ENCODE measurements at regions of chr6 and their contacts with region 1.

Region 1: DNA sequence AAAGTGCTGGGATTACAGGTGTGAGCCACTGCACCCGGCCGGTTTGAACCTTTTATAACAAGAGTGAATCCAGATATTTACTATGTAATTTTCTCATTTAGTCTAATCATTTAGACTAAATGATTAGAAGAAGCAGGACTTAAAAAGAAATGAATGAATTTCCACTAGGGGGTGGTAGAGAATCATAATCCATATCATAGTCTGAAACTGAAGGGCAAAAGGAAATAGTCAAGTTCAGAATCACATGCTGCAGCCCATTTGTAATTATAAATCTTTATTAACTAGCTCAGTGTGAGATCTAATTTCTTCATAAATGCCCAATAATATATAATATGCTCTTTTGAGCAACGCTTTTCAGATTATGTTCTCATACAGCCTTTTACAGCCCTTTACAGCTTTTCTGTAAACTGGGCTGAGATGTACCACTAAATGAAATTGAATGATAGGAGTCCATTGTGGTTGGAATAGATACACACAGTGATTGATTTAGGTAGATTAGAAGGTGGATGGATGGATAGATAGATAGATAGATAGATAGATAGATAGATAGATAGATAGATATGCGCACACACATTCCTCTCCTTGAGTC is 31.8 kb downstream of the PSMB9 start:
- DNase-seq: no peak
- H3K4me3 ChIP-seq: no peak overlapping the region
- H3K27ac ChIP-seq: no peak overlapping the region
- H3K4me1 ChIP-seq: no peaks in the 10 kb centered on the region
- H3K27me3 ChIP-seq: no peaks in the 10 kb centered on the region
- CTCF ChIP-seq: peak; percentile 36 to 85 (median 76)
- POLR2A ChIP-seq: no peak

Region 2: DNA sequence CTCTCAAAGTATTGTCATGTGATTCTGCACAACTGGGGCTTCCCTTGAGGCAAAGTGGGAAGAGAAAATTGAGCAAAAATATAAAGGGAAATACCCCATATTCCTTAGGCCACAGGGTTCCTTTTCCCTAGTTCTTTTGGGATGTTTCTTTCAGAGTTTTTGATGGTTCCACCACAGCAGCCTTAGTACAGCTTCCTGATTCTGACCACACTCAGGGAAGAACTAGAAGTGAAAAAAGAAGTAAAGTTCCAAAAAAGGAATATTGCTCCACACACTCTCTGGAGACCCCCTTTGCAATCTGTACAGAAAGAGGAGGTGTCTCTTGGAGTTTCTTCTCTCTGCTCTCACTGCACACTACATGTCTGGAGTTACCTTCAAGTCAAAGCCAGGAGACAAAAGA is 172.6 kb before region 1 on chr6:
- intact Hi-C with region 1: no loop called
- DNase-seq: no peak
- H3K4me3 ChIP-seq: no peak overlapping the region
- H3K27ac ChIP-seq: no peak overlapping the region
- H3K4me1 ChIP-seq: no peaks in the 10 kb centered on the region
- H3K27me3 ChIP-seq: no peaks in the 10 kb centered on the region
- CTCF ChIP-seq: no peak
- POLR2A ChIP-seq: no peak

Region 3: DNA sequence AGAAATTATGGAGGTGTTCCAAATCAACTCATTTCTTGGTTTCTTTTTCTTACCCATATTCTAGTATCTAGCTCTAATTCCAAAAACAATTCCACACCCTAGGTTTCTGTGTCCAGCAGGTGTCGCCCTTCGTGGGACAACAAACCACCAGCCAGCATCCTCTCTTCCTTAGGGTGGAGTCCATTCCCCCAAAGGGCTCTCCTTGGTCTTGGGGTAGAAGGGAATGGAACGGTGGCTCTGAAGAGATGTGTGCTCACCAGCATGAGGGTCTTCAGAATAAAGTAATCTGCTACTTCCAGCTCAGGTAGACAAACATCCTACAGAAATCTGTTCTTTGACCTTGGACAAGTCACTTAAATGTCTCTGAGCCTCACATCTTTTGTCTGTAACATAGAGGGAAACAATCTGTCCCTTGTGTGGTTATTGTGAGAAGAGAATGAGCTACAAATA is 47.9 kb after region 1 on chr6:
- intact Hi-C with region 1: loop called (anchors 5 kb)
- DNase-seq: peak; percentile 74
- H3K4me3 ChIP-seq: no peak overlapping the region
- H3K27ac ChIP-seq: no peak overlapping the region
- H3K4me1 ChIP-seq: no peaks in the 10 kb centered on the region
- H3K27me3 ChIP-seq: no peaks in the 10 kb centered on the region
- CTCF ChIP-seq: peak; percentile 67 to 80 (median 72)
- POLR2A ChIP-seq: no peak

Measured in prostate gland (tissue), 2 donors.